Right lobe of liver (tissue), 6 donors: ENCODE measurements at regions of chr13 and their contacts with region 1.

Region 1: GRCh38 chr13:32595306-32595705 is 9.1 kb downstream of the PDS5B start:
- DNase-seq: no peak
- ATAC-seq: no peak
- H3K4me3 ChIP-seq: no peak overlapping the region
- H3K27ac ChIP-seq: no peak overlapping the region
- H3K4me1 ChIP-seq: peaks cover 0 to 2% (median 0%) of the 10 kb centered on the region in 4 donors
- H3K27me3 ChIP-seq: no peaks in the 10 kb centered on the region
- CTCF ChIP-seq: no peak
- POLR2A ChIP-seq: no peak

Region 2: GRCh38 chr13:32632343-32632909 is 37.1 kb after region 1 on chr13:
- intact Hi-C with region 1: loop called in 1 of 2 experiments (anchors 5 kb)
- DNase-seq: no peak
- ATAC-seq: no peak
- H3K4me3 ChIP-seq: no peak overlapping the region
- H3K27ac ChIP-seq: no peak overlapping the region
- H3K4me1 ChIP-seq: peaks cover 0 to 10% (median 0%) of the 10 kb centered on the region in 4 donors
- H3K27me3 ChIP-seq: no peaks in the 10 kb centered on the region
- CTCF ChIP-seq: no peak
- POLR2A ChIP-seq: no peak

Region 3: GRCh38 chr13:32824671-32825070 is 229.4 kb after region 1 on chr13:
- intact Hi-C with region 1: no loop called
- DNase-seq: no peak
- ATAC-seq: peak in 1 of 4 donors; percentile 33
- H3K4me3 ChIP-seq: no peak overlapping the region
- H3K27ac ChIP-seq: no peak overlapping the region
- H3K4me1 ChIP-seq: no peaks in the 10 kb centered on the region
- H3K27me3 ChIP-seq: no peaks in the 10 kb centered on the region
- CTCF ChIP-seq: no peak
- POLR2A ChIP-seq: no peak